Caco-2 (cell line): ENCODE measurements at regions of chr11 and their contacts with region 1.

Region 1: GRCh38 chr11:128026596-128026995 is 560.8 kb downstream of the ETS1 start:
- DNase-seq: no peak
- H3K4me3 ChIP-seq: no peak overlapping the region
- H3K4me3 Mint-ChIP-seq: no peak overlapping the region
- H3K27ac Mint-ChIP-seq: no peak overlapping the region
- H3K4me1 ChIP-seq: no peaks in the 10 kb centered on the region
- H3K4me1 Mint-ChIP-seq: peaks cover 7% of the 10 kb centered on the region
- H3K27me3 ChIP-seq: no peaks in the 10 kb centered on the region; the same call in 1 of the 2 replicates
- H3K27me3 Mint-ChIP-seq: peaks cover 14% of the 10 kb centered on the region
- CTCF ChIP-seq: no peak

Region 2: DNA sequence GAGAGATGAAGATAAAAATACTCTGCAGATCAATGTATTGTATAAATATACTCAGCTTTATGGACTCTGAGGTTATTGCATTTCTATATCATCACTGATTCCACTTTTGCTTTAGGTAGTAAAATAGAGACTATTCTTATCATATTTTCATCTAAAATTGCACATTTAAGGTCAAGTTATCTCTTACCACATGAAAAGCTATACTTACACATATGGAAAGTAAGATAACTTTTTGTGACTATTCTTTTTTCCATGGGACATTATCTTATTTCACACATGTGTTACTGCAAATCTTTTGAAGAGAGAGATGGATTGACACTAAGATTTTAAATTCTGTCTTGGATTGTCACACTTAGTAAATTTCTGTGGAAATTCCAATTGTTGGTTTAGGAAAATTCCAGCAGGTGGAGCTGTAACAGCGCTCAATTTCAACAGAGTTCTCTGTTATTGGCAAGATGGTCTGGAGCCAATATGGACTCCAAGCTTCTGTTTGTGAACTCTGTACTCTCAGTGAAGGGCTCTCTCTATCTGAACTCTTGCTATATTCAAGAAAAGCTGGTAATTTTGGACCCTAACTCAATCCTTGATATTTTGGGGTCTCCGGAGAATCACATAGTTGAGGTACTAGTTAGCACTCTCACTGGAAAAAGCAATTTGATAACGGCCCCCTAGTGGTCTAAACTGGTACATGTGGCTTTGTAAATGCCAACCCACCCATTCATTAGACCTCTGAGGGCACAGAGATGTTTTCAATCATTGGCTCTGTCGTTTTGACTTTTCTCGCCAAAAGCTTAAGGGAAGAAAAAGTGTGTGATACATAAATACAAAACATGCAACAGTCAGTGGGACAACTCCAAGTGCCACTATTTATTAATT is 131.1 kb after region 1 on chr11:
- CTCF ChIA-PET with region 1: interaction called, 7 read pairs
- POLR2A ChIA-PET with region 1: no interaction called
- intact Hi-C with region 1: loop called (anchors 1 kb)
- DNase-seq: peak; percentile 65 to 80
- H3K4me3 ChIP-seq: no peak overlapping the region
- H3K4me3 Mint-ChIP-seq: peak overlapping the region; percentile 24
- H3K27ac Mint-ChIP-seq: no peak overlapping the region
- H3K4me1 ChIP-seq: no peaks in the 10 kb centered on the region
- H3K4me1 Mint-ChIP-seq: no peaks in the 10 kb centered on the region
- H3K27me3 ChIP-seq: peaks cover 2% of the 10 kb centered on the region; the same call in 1 of the 2 replicates
- H3K27me3 Mint-ChIP-seq: peaks cover 23% of the 10 kb centered on the region
- CTCF ChIP-seq: peak; percentile 86 to 99

Region 3: DNA sequence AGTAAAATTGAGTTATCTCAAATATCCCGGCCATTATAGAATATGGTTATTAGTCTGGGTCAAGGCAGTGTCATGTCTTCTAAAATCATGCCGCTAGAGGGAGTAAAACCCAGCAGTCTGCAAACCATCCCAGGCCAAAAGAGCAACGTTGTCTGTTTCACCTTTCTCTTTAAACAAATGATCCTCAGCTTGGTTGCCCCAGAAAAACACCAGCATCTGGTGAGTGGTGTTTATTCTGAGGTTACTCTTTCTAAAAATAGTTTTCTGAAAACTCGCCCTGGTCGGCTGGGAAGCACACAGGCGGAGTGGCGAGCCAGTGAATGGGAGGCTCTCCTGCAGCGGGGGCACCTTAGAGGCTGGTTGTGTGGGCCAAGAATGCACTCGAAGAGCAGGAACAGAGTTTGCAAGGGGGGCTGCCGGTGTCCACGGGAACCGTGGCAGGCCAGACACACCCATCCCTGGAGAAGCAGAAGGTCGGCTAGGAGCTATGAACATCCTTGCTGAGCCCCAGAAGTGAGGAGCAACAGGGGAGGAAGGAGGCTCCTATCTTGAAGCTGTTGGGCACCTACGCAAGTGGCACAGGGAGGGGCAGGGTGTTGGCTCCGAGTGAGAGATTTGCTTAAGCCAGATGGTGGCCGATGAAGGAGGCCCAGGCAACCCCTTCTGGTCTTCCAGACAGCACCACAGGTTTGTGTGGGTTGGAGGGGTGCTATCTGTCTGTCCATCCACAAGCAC is 263.7 kb after region 1 on chr11:
- CTCF ChIA-PET with region 1: no interaction called
- POLR2A ChIA-PET with region 1: no interaction called
- intact Hi-C with region 1: loop called (anchors 1 kb)
- DNase-seq: peak in 1 of 2 experiments; percentile 78
- H3K4me3 ChIP-seq: no peak overlapping the region
- H3K4me3 Mint-ChIP-seq: no peak overlapping the region
- H3K27ac Mint-ChIP-seq: no peak overlapping the region
- H3K4me1 ChIP-seq: no peaks in the 10 kb centered on the region
- H3K4me1 Mint-ChIP-seq: no peaks in the 10 kb centered on the region
- H3K27me3 ChIP-seq: no peaks in the 10 kb centered on the region; the same call in 1 of the 2 replicates
- H3K27me3 Mint-ChIP-seq: peaks cover 14% of the 10 kb centered on the region
- CTCF ChIP-seq: peak; percentile 88 to 95